ENCODE measurements at regions of chr6 and their contacts with region 1.

Region 1: GRCh38 chr6:57316581-57317059 is 810 bp upstream of the PRIM2 start:
- DNase-seq: peak; percentile 89
- ATAC-seq: peak; percentile 90
- H3K4me3 Mint-ChIP-seq: peak overlapping the region; percentile 100
- H3K27ac Mint-ChIP-seq: peak overlapping the region; percentile 97
- H3K4me1 Mint-ChIP-seq: peaks cover 37% of the 10 kb centered on the region
- H3K27me3 Mint-ChIP-seq: peaks cover 9% of the 10 kb centered on the region

Region 2: GRCh38 chr6:56902641-56903464 is 413.8 kb before region 1 on chr6:
- CTCF ChIA-PET with region 1: interaction called, 113 read pairs
- POLR2A ChIA-PET with region 1: interaction called, 3 read pairs
- DNase-seq: no peak
- ATAC-seq: no peak
- H3K4me3 Mint-ChIP-seq: no peak overlapping the region
- H3K27ac Mint-ChIP-seq: no peak overlapping the region
- H3K4me1 Mint-ChIP-seq: no peaks in the 10 kb centered on the region
- H3K27me3 Mint-ChIP-seq: peaks cover 16% of the 10 kb centered on the region

Region 3: GRCh38 chr6:56955171-56956045 is 361.2 kb before region 1 on chr6:
- CTCF ChIA-PET with region 1: interaction called, 13 read pairs
- POLR2A ChIA-PET with region 1: no interaction called
- DNase-seq: peak; percentile 69
- ATAC-seq: peak; percentile 74
- H3K4me3 Mint-ChIP-seq: peak overlapping the region; percentile 72
- H3K27ac Mint-ChIP-seq: peak overlapping the region; percentile 35
- H3K4me1 Mint-ChIP-seq: peaks cover 21% of the 10 kb centered on the region
- H3K27me3 Mint-ChIP-seq: peaks cover 56% of the 10 kb centered on the region

Region 4: DNA sequence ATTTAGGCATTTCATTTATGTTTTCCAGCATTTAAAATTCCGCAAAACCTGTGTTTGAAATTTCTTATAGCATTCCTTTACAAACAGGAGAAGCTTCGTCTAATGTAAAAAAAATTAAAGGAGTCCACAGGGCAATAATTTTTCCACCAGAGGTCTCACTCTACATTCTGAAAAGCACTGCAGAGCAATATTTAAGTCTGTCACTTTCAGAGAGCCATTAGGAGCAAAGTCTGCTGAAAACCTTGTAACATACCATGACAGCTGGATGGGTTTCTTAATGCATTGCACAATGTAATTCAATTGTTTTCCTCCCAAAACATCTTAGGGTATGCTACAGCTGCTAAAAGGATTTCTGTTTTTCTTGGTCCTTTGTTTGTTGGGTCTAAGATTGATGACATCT is 126.5 kb before region 1 on chr6:
- CTCF ChIA-PET with region 1: interaction called, 12 read pairs
- POLR2A ChIA-PET with region 1: no interaction called
- DNase-seq: no peak
- ATAC-seq: no peak
- H3K4me3 Mint-ChIP-seq: no peak overlapping the region
- H3K27ac Mint-ChIP-seq: no peak overlapping the region
- H3K4me1 Mint-ChIP-seq: no peaks in the 10 kb centered on the region
- H3K27me3 Mint-ChIP-seq: no peaks in the 10 kb centered on the region

Region 5: DNA sequence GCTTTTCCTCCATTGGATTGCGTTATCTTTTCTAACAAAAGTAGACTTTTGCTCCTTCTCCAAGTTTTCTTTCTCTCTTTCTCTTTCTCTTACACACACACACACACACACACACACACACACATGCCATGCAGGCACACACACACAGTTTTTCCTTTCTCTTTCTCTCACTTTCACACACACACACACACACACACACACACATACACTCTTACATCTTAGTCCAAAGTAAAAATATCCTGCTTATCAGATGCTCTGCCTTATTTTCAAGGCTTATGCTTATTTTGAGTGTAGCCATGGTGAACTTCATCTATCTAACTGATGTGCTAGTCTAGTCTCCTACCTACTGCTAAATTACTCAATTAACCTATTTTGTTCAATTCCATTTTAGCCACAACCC is 60.1 kb before region 1 on chr6:
- CTCF ChIA-PET with region 1: no interaction called
- POLR2A ChIA-PET with region 1: no interaction called
- DNase-seq: no peak
- ATAC-seq: no peak
- H3K4me3 Mint-ChIP-seq: no peak overlapping the region
- H3K27ac Mint-ChIP-seq: no peak overlapping the region
- H3K4me1 Mint-ChIP-seq: no peaks in the 10 kb centered on the region
- H3K27me3 Mint-ChIP-seq: peaks cover 11% of the 10 kb centered on the region

Region 6: GRCh38 chr6:57267586-57268293 is 48.9 kb before region 1 on chr6:
- CTCF ChIA-PET with region 1: interaction called, 13 read pairs
- POLR2A ChIA-PET with region 1: no interaction called
- DNase-seq: peak; percentile 31
- ATAC-seq: no peak
- H3K4me3 Mint-ChIP-seq: no peak overlapping the region
- H3K27ac Mint-ChIP-seq: no peak overlapping the region
- H3K4me1 Mint-ChIP-seq: no peaks in the 10 kb centered on the region
- H3K27me3 Mint-ChIP-seq: peaks cover 13% of the 10 kb centered on the region

Region 7: DNA sequence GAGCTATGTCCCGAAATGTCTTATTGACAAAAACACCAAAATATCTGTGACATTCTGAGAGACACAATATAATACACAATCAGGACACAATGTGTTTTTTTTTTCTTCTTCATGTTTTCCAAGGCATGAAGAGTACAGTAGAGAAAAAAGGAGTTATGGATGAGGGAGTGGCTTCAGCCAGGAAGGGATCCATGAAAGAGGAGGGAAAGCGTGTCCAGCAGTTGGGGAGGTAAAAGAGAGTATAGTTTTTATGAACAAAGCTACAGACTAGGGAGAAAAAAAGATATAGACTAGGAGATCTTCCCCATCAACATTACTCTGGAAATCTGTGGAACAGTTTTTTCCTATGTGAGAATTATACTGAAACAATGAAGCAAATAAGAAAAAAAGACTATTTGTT is 38.0 kb before region 1 on chr6:
- CTCF ChIA-PET with region 1: no interaction called
- POLR2A ChIA-PET with region 1: no interaction called
- DNase-seq: no peak
- ATAC-seq: no peak
- H3K4me3 Mint-ChIP-seq: no peak overlapping the region
- H3K27ac Mint-ChIP-seq: no peak overlapping the region
- H3K4me1 Mint-ChIP-seq: no peaks in the 10 kb centered on the region
- H3K27me3 Mint-ChIP-seq: peaks cover 7% of the 10 kb centered on the region

Region 8: GRCh38 chr6:57303931-57304681 is 12.5 kb before region 1 on chr6:
- CTCF ChIA-PET with region 1: interaction called, 11 read pairs
- POLR2A ChIA-PET with region 1: no interaction called
- DNase-seq: no peak
- ATAC-seq: no peak
- H3K4me3 Mint-ChIP-seq: no peak overlapping the region
- H3K27ac Mint-ChIP-seq: no peak overlapping the region
- H3K4me1 Mint-ChIP-seq: no peaks in the 10 kb centered on the region
- H3K27me3 Mint-ChIP-seq: peaks cover 16% of the 10 kb centered on the region

Region 9: DNA sequence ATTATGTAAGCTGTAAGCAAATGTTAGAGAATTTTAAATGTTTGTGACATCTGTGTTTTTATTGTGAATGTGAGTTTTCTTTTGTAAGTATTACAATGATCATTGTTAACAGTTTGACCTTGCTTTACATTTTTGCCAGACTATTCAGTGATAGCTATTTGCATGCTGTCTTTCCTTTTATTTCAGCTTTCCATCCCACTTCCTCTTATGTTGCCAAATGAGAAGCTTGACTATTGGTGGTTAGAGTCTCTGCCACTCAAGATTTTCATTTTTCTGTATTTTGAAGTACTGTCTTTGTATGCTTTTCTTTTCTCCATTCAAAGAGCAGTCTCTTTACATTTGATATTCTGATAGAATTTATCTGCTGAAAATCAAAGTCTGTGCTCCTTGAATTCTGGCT is 104.9 kb after region 1 on chr6:
- CTCF ChIA-PET with region 1: no interaction called
- POLR2A ChIA-PET with region 1: no interaction called
- DNase-seq: no peak
- ATAC-seq: no peak
- H3K4me3 Mint-ChIP-seq: no peak overlapping the region
- H3K27ac Mint-ChIP-seq: no peak overlapping the region
- H3K4me1 Mint-ChIP-seq: peaks cover 6% of the 10 kb centered on the region
- H3K27me3 Mint-ChIP-seq: no peaks in the 10 kb centered on the region